Aorta (tissue), 5 donors: ENCODE measurements at regions of chr5 and their contacts with region 1.

Region 1: DNA sequence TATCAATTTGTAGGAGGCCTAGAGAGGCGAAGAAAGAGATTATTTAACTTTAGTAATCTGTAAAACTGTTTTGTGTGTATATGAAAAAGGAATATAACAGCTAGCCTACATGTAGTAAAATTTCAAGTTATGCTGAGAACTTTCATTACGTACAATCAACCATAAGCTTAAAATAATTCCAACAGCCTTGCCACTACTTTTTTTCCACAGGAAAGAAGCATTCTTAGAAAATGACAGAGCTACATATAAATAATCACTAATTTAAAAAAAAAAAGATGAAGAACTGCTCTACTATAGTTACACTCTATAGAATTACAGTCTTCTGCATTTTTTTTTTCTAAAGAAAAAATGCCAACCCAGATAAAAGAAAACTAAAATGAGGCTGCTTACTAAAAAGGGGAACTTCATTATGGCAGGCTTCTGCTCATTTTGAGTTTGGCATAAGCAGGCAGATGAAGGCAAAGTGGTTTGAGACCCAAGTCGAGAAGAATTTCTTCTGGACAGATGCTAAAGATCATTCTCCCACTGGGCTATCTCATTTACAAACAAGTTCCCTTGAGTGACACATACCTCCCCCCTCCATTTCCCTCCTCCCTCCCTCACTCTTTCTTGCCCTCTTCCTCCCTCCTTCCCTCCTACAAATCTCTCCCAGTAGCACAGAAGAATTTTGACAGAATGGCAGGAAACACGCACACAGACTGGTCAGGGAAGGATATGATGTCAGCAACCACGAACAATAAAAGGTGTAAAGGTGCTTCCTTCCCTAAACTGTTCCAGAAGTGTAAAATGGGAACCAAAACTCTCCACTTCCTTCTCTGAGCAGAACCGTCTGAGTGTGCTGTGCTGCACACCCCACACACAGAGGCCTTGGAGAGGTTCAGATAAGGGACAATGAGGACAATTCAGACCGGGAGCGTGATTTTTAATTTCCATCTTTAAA is 56.1 kb downstream of the MEF2C start:
- DNase-seq: peak in 1 of 2 donors; percentile 46
- ATAC-seq: peak; percentile 80
- H3K4me3 ChIP-seq: no peak overlapping the region
- H3K27ac ChIP-seq: peak overlapping the region; percentile 62 to 72
- H3K4me1 ChIP-seq: peaks cover 3 to 9% of the 10 kb centered on the region in 2 donors
- H3K27me3 ChIP-seq: no peaks in the 10 kb centered on the region

Region 2: GRCh38 chr5:88785391-88786219 is 41.3 kb before region 1 on chr5:
- intact Hi-C with region 1: loop called (anchors 5 kb)
- DNase-seq: no peak
- ATAC-seq: peak; percentile 93
- H3K4me3 ChIP-seq: peak overlapping the region in 1 of 2 donors; percentile 33
- H3K27ac ChIP-seq: peak overlapping the region; percentile 54 to 96
- H3K4me1 ChIP-seq: peaks cover 0 to 2% of the 10 kb centered on the region in 2 donors
- H3K27me3 ChIP-seq: no peaks in the 10 kb centered on the region